HEK293T (cell line): ENCODE measurements at regions of chr19 and their contacts with region 1.

Region 1: DNA sequence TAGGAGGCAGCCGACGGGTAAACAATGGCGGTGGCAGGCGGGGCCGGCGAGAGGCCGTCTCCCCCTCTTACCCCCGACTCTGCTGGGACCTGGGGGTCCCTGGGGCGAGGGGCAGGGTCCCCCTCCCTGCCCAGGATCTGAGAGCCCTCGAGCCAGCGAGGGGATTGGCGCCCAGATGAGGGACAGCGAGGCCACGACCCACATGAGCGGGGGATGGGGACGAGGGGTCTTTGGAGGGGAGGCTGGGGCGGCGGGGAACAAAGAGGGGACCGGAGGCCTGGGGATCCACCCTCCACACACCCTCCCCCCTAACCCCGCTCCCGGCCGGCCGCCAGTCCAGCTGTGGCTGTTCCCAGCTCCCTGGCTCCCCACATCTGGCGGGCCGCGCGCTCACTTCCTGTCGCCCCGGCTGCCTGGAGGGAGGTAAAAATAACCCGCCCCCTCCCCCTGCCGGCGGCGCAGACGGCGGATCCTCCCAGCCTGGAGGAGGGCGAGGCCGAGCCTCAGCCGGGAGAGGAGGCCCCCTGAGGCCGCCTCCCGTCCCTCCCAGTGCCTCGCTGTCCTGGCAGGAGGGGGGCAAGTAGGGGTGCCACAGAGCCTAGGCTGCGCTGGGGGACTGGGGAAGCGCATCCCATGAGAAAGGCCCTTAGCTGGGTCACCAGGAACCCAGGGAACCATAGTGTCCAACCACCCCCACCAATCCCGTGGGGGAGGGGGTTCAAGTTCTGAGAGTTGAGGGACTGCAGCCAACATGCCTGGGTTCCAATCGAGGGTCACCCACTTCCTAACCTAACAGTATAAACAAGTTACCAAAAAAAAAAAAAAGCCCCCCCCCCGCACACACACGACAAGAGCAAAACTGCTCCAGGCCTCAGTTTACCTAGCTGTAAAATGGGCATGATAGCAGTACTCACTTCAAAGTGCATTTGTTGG is 29.3 kb upstream of the NANOS3 start:
- DNase-seq: peak; percentile 77

Region 2: GRCh38 chr19:13827244-13828030 is 20.2 kb before region 1 on chr19:
- CTCF ChIA-PET with region 1: no interaction called
- POLR2A ChIA-PET with region 1: no interaction called
- DNase-seq: no peak

Region 3: GRCh38 chr19:13861732-13862531 is 14.3 kb after region 1 on chr19:
- CTCF ChIA-PET with region 1: interaction called, 12 read pairs
- POLR2A ChIA-PET with region 1: interaction called, 8 read pairs
- DNase-seq: peak; percentile 91

Region 4: DNA sequence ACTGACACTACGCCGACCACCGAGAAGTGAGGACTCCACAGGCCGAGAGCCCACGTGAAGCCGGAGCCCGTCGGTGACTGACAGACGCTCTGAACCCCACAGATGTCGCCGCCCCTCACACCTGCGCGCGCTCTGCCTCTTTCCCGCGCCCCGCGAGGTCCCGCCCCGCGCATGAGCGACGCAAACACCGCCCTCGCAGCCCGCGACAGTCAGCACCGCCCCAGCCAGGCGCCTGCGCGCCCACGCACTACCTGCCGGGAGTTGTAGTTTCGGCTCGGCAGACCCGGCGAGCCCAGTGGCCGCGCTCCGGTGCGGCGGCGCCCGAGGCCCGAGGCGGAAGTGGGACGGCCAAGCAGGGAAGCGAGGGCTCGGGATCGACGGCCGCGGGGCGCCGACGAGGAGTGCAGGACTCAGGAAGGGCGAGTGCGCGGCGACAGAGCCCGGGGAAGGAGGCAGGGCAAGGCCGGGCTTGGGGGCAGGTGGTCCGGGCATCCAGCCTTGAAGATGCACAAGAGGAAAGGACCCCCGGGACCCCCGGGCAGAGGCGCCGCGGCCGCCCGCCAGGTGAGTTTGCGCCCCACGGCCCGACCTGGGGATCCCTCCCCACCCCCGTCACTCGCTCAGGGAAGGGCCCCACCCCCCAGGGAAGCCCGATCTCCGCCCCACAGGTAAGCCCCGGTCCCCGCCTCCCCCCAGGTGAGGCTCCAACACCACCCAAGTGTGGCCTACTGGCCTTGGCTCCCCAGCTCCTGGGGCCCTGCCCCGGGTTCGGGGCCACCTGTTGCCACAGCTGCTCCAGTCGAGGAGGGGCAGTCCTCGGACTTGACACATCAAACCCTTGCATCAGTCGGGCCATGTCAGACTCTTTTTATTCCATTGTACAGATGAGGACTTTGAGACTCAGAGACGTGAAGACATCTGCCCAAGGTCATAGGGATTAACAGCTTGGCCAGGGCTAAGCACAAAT is 58.5 kb after region 1 on chr19 and contains the starts of genes BRME1 and CC2D1A:
- CTCF ChIA-PET with region 1: no interaction called
- POLR2A ChIA-PET with region 1: no interaction called
- DNase-seq: peak; percentile 98